ENCODE measurements at regions of chr2 and their contacts with region 1.

Region 1: GRCh38 chr2:58571181-58571852 is 330.2 kb upstream of the FANCL start:
- DNase-seq: peak; percentile 73
- H3K4me3 Mint-ChIP-seq: no peak overlapping the region
- H3K27ac Mint-ChIP-seq: peak overlapping the region; percentile 54
- H3K4me1 Mint-ChIP-seq: peaks cover 36% of the 10 kb centered on the region
- H3K27me3 Mint-ChIP-seq: no peaks in the 10 kb centered on the region
- CTCF ChIP-seq: peak; percentile 70

Region 2: GRCh38 chr2:57759822-57760300 is 811.5 kb before region 1 on chr2:
- CTCF ChIA-PET with region 1: no interaction called
- intact Hi-C with region 1: loop called (anchors 10 kb)
- DNase-seq: peak; percentile 95
- H3K4me3 Mint-ChIP-seq: peak overlapping the region; percentile 63
- H3K27ac Mint-ChIP-seq: peak overlapping the region; percentile 72
- H3K4me1 Mint-ChIP-seq: peaks cover 22% of the 10 kb centered on the region
- H3K27me3 Mint-ChIP-seq: no peaks in the 10 kb centered on the region
- CTCF ChIP-seq: peak; percentile 92

Region 3: DNA sequence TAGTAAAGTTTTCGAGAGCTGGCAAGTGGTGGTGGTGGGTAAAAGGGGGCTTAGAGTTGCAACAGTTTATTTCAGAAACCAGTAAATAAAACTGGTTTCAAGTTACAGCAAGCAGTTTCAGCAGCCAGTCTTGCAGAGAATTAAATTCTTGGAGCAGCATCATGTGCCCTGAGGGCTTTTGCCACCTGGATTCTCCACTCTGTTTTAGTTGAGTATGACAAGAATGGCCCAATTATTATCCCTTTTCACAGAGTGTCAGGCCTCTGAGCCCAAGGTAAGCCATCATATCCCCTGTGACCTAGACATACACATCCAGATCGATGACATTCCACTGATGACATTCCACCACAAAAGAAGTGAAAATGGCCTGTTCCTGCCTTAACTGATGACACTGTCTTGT is 257.4 kb before region 1 on chr2:
- CTCF ChIA-PET with region 1: no interaction called
- intact Hi-C with region 1: no loop called
- DNase-seq: no peak
- H3K4me3 Mint-ChIP-seq: no peak overlapping the region
- H3K27ac Mint-ChIP-seq: no peak overlapping the region
- H3K4me1 Mint-ChIP-seq: no peaks in the 10 kb centered on the region
- H3K27me3 Mint-ChIP-seq: no peaks in the 10 kb centered on the region
- CTCF ChIP-seq: no peak

Region 4: DNA sequence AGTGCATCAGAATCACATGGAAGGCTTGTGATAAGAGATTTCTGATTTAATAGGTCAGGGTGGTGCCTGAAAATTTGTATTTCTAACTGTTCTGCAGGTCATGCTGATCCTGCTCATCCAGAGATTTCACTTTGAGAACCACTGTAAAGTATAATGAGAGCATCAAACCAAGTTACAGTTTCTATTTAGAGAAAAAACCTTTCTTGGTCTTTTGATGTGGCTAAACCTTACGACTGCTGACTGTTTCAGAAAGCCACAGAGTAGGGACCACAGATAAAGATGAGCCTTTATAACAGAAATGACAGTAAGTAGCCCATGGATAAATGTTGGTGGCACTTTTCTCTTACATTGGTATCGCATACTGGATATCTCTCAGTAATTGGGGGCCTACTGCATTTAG is 220.8 kb before region 1 on chr2:
- CTCF ChIA-PET with region 1: no interaction called
- intact Hi-C with region 1: no loop called
- DNase-seq: no peak
- H3K4me3 Mint-ChIP-seq: no peak overlapping the region
- H3K27ac Mint-ChIP-seq: no peak overlapping the region
- H3K4me1 Mint-ChIP-seq: no peaks in the 10 kb centered on the region
- H3K27me3 Mint-ChIP-seq: no peaks in the 10 kb centered on the region
- CTCF ChIP-seq: no peak

Region 5: GRCh38 chr2:58633576-58634365 is 62.5 kb after region 1 on chr2:
- CTCF ChIA-PET with region 1: no interaction called
- intact Hi-C with region 1: loop called (anchors 2 kb)
- DNase-seq: no peak
- H3K4me3 Mint-ChIP-seq: no peak overlapping the region
- H3K27ac Mint-ChIP-seq: peak overlapping the region; percentile 17
- H3K4me1 Mint-ChIP-seq: peaks cover 53% of the 10 kb centered on the region
- H3K27me3 Mint-ChIP-seq: no peaks in the 10 kb centered on the region
- CTCF ChIP-seq: no peak

Region 6: GRCh38 chr2:58702302-58702885 is 131.1 kb after region 1 on chr2:
- CTCF ChIA-PET with region 1: no interaction called
- intact Hi-C with region 1: loop called (anchors 1 kb)
- DNase-seq: peak; percentile 50
- H3K4me3 Mint-ChIP-seq: no peak overlapping the region
- H3K27ac Mint-ChIP-seq: peak overlapping the region; percentile 48
- H3K4me1 Mint-ChIP-seq: peaks cover 18% of the 10 kb centered on the region
- H3K27me3 Mint-ChIP-seq: no peaks in the 10 kb centered on the region
- CTCF ChIP-seq: no peak

Region 7: GRCh38 chr2:59182249-59182648 is 610.9 kb after region 1 on chr2:
- CTCF ChIA-PET with region 1: no interaction called
- intact Hi-C with region 1: loop called (anchors 2 kb)
- DNase-seq: peak; percentile 25
- H3K4me3 Mint-ChIP-seq: no peak overlapping the region
- H3K27ac Mint-ChIP-seq: no peak overlapping the region
- H3K4me1 Mint-ChIP-seq: no peaks in the 10 kb centered on the region
- H3K27me3 Mint-ChIP-seq: peaks cover 16% of the 10 kb centered on the region
- CTCF ChIP-seq: peak; percentile 38

Region 8: DNA sequence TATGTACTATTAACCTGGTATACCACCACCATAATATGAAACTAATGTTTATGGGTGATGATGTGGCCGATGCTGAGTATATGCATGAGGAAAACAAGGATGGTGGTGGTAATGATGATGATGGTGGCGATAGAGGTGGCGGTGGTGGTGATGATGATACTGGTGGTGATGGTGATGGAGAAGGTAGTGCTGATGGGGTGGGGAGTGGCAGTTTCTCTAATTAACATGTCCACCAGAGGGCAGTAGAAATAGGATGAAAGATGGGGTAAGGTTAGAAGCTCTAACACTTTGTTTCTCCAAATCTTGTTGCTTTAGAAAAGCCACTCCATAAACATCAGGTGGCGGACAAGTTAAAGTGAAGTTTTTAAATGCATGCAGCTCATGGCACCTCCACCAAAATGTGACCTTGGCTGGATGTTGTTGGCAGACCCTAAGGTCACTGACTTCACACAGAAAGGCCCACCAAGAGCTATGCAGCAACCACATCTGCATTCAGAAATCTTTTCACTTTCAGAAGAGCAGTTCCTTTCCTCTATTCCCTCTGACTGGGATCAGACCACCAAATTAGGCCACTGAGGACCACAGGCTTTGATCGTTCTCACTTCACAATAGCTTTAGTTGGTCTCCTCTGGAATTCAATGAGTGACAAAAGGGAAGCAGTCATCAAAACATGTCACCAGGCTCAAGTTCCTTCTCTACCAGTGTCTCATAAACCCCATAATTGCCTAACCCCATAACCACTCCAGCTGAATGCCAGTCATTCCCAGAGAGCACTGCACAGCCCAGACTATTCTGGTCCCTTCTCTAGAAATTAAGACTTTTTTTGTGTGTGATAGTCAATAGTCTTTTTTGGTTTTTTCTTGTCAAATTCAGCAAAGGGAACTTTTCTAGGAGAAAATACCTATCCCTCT is 1989.7 kb after region 1 on chr2:
- CTCF ChIA-PET with region 1: no interaction called
- intact Hi-C with region 1: loop called (anchors 10 kb)
- DNase-seq: peak; percentile 45
- H3K4me3 Mint-ChIP-seq: no peak overlapping the region
- H3K27ac Mint-ChIP-seq: no peak overlapping the region
- H3K4me1 Mint-ChIP-seq: peaks cover 8% of the 10 kb centered on the region
- H3K27me3 Mint-ChIP-seq: peaks cover 73% of the 10 kb centered on the region
- CTCF ChIP-seq: peak; percentile 14

Measured in Calu3 (cell line).